Heart left ventricle (tissue), 16 donors: ENCODE measurements at regions of chr11 and their contacts with region 1.

Region 1: DNA sequence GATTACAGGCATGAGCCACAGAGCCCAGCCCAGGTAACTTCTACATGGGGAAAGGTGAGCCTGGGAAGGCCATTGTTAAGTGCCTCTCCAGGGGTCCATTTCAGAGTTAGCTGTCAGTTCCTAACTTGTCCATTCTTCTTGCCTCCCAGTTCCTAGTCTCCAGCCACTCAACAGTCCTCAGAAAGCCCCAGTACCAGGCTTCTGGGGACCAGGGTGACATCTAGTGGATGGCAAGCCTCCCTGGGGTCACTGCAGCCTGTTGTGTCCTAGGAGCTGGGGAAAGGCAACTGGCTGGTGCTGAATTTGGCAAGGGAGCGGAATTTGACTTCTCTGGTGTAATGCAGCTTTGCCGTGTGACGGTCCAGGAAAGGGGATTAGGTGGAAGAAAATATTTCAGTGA is 2.1 kb downstream of the LGALS12 start:
- DNase-seq: peak in 4 of 5 donors; percentile 41 to 76 (median 58)
- ATAC-seq: peak; percentile 62 to 78 (median 68)
- H3K4me3 ChIP-seq: no peak overlapping the region
- H3K27ac ChIP-seq: no peak overlapping the region
- H3K4me1 ChIP-seq: peaks cover 0 to 51% (median 11%) of the 10 kb centered on the region in 12 donors
- H3K27me3 ChIP-seq: no peaks in the 10 kb centered on the region
- CTCF ChIP-seq: peak in 10 of 12 donors; percentile 21 to 56 (median 42)
- POLR2A ChIP-seq: no peak

Region 2: DNA sequence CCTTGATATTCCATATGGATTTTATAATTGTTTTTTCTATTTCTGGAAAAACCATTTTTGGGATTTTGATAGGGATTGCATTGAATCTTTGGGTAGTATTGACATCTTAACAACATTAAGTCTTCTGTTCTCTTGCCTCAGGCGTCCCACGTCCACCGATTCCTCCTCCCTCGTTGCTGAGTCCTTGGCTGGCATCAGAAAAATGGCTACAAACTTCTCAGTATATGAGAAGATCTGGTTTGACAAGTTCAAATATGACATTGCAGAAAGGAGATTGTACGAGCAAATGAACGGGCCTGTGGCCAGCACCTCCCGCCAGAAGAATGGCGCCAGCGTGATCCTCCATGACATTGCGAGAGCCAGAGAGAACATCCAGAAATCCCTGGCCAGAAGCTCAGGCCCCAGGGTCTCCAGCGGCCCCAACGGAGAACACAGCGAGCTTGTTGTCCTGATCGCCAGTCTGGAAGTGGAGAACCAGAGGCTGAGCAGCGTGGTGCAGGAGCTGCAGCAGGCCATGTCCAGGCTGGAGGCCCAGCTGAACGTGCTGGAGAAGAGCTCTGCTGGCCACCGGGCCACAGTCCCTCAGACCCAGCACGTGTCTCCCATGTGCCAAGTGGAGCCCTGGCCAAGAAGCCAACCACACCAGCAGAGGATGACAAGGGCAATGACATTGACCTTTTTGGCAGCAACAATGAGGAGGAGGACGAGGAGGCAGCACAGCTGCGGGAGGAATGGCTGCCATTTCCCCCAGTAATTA is 1338.7 kb before region 1 on chr11:
- intact Hi-C with region 1: no loop called
- DNase-seq: peak in 3 of 5 donors; percentile 24 to 59 (median 52)
- ATAC-seq: peak in 3 of 4 donors; percentile 55 to 60 (median 59)
- H3K4me3 ChIP-seq: no peak overlapping the region
- H3K27ac ChIP-seq: peak overlapping the region in 7 of 12 donors; percentile 12 to 72 (median 48)
- H3K4me1 ChIP-seq: peaks cover 0 to 19% (median 0%) of the 10 kb centered on the region in 12 donors
- H3K27me3 ChIP-seq: peaks cover 0 to 16% (median 3%) of the 10 kb centered on the region in 9 donors
- CTCF ChIP-seq: no peak
- POLR2A ChIP-seq: no peak

Region 3: GRCh38 chr11:63445720-63446119 is 62.3 kb before region 1 on chr11:
- intact Hi-C with region 1: loop called in 1 of 10 experiments (anchors 10 kb)
- DNase-seq: no peak
- ATAC-seq: no peak
- H3K4me3 ChIP-seq: no peak overlapping the region
- H3K27ac ChIP-seq: no peak overlapping the region
- H3K4me1 ChIP-seq: no peaks in the 10 kb centered on the region
- H3K27me3 ChIP-seq: peaks cover 0 to 4% (median 0%) of the 10 kb centered on the region in 9 donors
- CTCF ChIP-seq: no peak
- POLR2A ChIP-seq: no peak

Region 4: DNA sequence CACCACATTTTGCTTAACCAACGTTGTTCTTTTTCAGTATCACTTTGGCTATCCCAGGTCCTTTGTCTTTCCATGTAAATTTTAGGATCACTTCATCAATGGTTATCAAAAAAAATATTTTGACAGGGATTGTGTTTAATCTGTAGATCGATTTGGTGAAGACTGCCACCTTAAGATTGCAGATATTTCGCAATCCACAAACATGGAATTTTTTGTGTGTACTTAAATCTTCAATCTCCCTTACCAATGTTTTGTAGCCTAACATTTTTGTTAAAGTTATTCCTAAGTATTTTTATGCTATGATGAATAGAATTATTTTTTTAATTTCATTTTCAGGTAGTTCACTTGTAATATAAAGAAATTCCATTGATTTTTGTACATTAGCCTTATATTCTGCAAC is 35.6 kb before region 1 on chr11:
- intact Hi-C with region 1: no loop called
- DNase-seq: no peak
- ATAC-seq: no peak
- H3K4me3 ChIP-seq: no peak overlapping the region
- H3K27ac ChIP-seq: no peak overlapping the region
- H3K4me1 ChIP-seq: no peaks in the 10 kb centered on the region
- H3K27me3 ChIP-seq: no peaks in the 10 kb centered on the region
- CTCF ChIP-seq: no peak
- POLR2A ChIP-seq: no peak

Region 5: DNA sequence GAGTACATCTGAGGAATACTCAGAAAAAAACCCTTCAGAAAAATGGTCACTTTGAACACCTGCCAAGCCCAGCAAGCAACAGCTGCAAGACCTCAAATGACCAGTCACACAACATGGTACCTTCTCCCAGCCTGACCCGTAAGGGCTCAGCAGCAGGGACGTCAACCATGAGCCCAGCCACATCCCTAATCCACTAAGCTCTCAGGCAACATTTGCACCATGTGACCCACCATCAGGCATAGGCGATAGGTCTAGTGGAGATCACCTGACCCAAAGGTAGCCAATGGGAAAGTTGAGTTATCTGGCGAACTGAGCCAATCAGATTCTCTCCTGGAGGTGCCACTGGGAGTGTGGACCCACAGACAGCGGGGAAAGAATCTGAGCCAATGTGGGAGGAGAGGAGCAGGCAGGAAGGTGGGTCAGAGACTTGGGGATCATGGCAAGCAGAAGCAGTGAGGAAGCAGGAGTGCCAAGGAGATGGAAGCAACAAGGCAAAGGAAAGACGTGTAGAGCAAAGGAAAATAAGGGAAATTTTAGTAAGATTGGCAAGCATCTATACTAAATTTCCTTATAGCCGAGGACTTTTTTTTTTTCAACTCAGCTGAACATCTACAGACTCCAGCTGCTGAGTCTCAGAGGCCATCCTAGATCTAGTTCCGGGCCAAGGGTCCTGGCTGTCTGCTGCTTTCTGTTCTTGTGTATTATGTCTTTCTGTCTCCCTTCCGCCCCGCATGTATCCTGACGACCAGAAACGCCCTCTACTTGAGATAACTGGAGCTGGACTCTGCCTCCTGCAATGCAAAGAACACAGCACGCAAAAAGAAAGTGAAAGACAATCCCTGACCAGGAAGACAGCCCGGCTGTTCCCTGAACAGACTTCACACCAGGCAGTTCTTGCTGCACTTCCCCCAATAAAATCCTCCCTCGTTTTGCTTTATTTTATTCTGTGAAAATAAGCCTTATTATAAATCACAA is 66.2 kb after region 1 on chr11:
- intact Hi-C with region 1: loop called in 1 of 10 experiments (anchors 5 kb)
- DNase-seq: peak in 4 of 5 donors; percentile 40 to 61 (median 51)
- ATAC-seq: peak; percentile 66 to 91 (median 78)
- H3K4me3 ChIP-seq: peak overlapping the region in 10 of 12 donors; percentile 1 to 46 (median 26)
- H3K27ac ChIP-seq: peak overlapping the region; percentile 45 to 87 (median 68)
- H3K4me1 ChIP-seq: peaks cover 3 to 25% (median 16%) of the 10 kb centered on the region in 12 donors
- H3K27me3 ChIP-seq: no peaks in the 10 kb centered on the region
- CTCF ChIP-seq: peak in 3 of 12 donors; percentile 18 to 36 (median 27)
- POLR2A ChIP-seq: no peak